Naive thymus-derived CD4-positive, alpha-beta T cell (primary cell): ENCODE measurements at regions of chr7 and their contacts with region 1.

Region 1: GRCh38 chr7:149422129-149422913 is 38.5 kb downstream of the ZNF777 start:
- DNase-seq: peak; percentile 25 to 85 (median 75)
- ATAC-seq: peak; percentile 99
- H3K4me3 ChIP-seq: peak overlapping the region; percentile 75
- H3K4me3 Mint-ChIP-seq: peak overlapping the region; percentile 69 to 80 (median 76)
- H3K27ac ChIP-seq: peak overlapping the region; percentile 77
- H3K27ac Mint-ChIP-seq: peak overlapping the region in 8 of 9 donors; percentile 68 to 84 (median 81)
- H3K4me1 ChIP-seq: no peaks in the 10 kb centered on the region
- H3K4me1 Mint-ChIP-seq: peaks cover 0 to 17% (median 7%) of the 10 kb centered on the region in 7 donors
- H3K27me3 ChIP-seq: no peaks in the 10 kb centered on the region
- H3K27me3 Mint-ChIP-seq: peaks cover 0 to 14% (median 0%) of the 10 kb centered on the region in 5 donors

Region 2: DNA sequence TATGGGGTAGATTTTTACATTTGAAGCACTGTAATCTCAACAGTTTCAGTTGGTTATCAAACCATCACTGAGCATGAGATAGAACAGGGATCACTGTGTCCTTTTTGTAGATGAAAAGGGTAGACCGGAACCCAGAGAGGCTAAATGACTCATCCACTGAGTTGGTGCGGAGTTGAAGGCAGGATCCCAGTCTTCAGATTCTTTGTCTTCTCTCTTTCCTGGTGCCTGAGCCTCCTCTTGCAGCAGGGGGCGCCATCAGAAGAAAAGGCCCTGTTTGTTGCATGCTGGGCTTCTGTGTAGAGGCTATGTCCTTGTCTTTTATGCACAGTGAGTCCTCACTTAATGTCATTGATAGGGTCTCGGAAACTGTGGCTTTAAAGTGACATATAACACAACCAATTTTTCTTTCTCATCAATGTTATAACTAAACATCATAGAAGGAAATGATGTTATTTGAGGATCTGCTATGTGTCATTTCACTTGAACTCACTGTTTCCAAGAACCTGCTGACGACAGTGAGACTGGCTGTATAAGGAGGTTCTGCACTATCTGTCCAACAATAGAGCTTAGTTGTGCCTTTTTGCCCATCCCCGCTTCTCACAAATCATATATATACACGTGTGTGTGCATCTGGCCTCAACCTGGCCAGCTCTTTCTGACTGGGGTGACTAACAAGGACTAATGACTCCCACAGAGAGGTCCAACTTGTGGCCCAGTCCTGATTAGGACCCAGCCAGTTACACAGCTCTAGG is 212.6 kb before region 1 on chr7:
- CTCF ChIA-PET with region 1: no interaction called
- POLR2A ChIA-PET with region 1: no interaction called
- intact Hi-C with region 1: loop called in 1 of 2 experiments (anchors 1 kb)
- DNase-seq: peak; percentile 18 to 74 (median 48)
- ATAC-seq: peak; percentile 73
- H3K4me3 ChIP-seq: no peak overlapping the region
- H3K4me3 Mint-ChIP-seq: peak overlapping the region in 1 of 10 donors; percentile 60
- H3K27ac ChIP-seq: no peak overlapping the region
- H3K27ac Mint-ChIP-seq: peak overlapping the region in 3 of 9 donors; percentile 6 to 79 (median 72)
- H3K4me1 ChIP-seq: no peaks in the 10 kb centered on the region
- H3K4me1 Mint-ChIP-seq: peaks cover 0 to 21% (median 5%) of the 10 kb centered on the region in 7 donors
- H3K27me3 ChIP-seq: no peaks in the 10 kb centered on the region
- H3K27me3 Mint-ChIP-seq: no peaks in the 10 kb centered on the region

Region 3: GRCh38 chr7:149239345-149240191 is 182.8 kb before region 1 on chr7 and contains the start of gene ZNF212:
- CTCF ChIA-PET with region 1: no interaction called
- POLR2A ChIA-PET with region 1: no interaction called
- intact Hi-C with region 1: loop called (anchors 1 to 2 kb)
- DNase-seq: peak; percentile 75 to 89 (median 84)
- ATAC-seq: peak; percentile 100
- H3K4me3 ChIP-seq: peak within 1 kb of the TSS; percentile 90
- H3K4me3 Mint-ChIP-seq: peak within 1 kb of the TSS; percentile 85 to 95 (median 92)
- H3K27ac ChIP-seq: peak within 1 kb of the TSS; percentile 76
- H3K27ac Mint-ChIP-seq: peak within 1 kb of the TSS; percentile 71 to 89 (median 87)
- H3K4me1 ChIP-seq: peaks cover 14 to 16% of the 10 kb centered on the region in 2 donors
- H3K4me1 Mint-ChIP-seq: peaks cover 23 to 43% (median 33%) of the 10 kb centered on the region in 7 donors
- H3K27me3 ChIP-seq: no peaks in the 10 kb centered on the region
- H3K27me3 Mint-ChIP-seq: peaks cover 0 to 6% (median 0%) of the 10 kb centered on the region in 5 donors
- total RNA-seq, gene ZNF212: 10.4 to 20.6 (median 13.3) TPM

Region 4: GRCh38 chr7:149284850-149285626 is 137.3 kb before region 1 on chr7:
- CTCF ChIA-PET with region 1: interaction called, 3 read pairs
- POLR2A ChIA-PET with region 1: interaction called, 10 read pairs
- intact Hi-C with region 1: loop called in 1 of 2 experiments (anchors 1 kb)
- DNase-seq: peak; percentile 96 to 99 (median 98)
- ATAC-seq: peak; percentile 98
- H3K4me3 ChIP-seq: peak overlapping the region; percentile 80
- H3K4me3 Mint-ChIP-seq: peak overlapping the region; percentile 79 to 97 (median 92)
- H3K27ac ChIP-seq: peak overlapping the region; percentile 72
- H3K27ac Mint-ChIP-seq: peak overlapping the region; percentile 76 to 96 (median 93)
- H3K4me1 ChIP-seq: peaks cover 30 to 36% of the 10 kb centered on the region in 2 donors
- H3K4me1 Mint-ChIP-seq: peaks cover 26 to 55% (median 46%) of the 10 kb centered on the region in 7 donors
- H3K27me3 ChIP-seq: no peaks in the 10 kb centered on the region
- H3K27me3 Mint-ChIP-seq: no peaks in the 10 kb centered on the region

Region 5: DNA sequence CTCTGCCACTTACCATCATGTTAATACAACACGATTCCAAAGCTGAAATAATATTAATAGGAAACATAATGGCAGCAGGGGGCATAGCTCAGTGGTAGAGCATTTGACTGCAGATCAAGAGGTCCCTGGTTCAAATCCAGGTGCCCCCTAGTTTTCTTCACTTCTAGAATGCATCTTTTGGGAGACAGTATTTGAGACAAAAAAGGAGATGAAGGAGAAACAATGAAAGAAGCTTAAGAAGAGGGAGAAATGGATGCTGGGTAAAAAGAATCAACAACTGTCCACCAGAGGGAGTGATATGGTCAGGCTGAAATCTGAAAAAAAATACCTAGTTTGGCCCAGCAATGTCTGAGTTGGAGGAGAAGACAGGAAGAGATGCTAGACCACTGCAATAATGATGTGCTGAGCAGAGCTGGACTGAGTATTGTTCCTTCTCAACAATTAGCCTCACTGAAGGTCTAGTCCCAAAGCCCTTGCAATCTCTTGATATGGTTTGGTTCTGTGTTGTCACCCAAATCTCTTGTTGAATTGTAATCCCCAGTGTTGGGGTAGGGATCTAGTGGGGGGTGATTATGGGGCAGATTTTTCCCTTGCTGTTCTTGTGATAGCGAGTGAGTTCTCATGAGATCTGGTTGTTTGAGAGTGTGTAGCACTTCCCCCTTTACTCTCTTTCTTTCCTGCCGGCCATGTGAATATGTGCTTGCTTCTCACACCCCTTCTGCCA is 112.0 kb before region 1 on chr7:
- CTCF ChIA-PET with region 1: no interaction called
- POLR2A ChIA-PET with region 1: no interaction called
- intact Hi-C with region 1: loop called in 1 of 2 experiments (anchors 1 kb)
- DNase-seq: peak in 3 of 9 donors; percentile 11 to 30 (median 26)
- ATAC-seq: peak; percentile 65
- H3K4me3 ChIP-seq: no peak overlapping the region
- H3K4me3 Mint-ChIP-seq: peak overlapping the region in 1 of 10 donors; percentile 0
- H3K27ac ChIP-seq: no peak overlapping the region
- H3K27ac Mint-ChIP-seq: peak overlapping the region in 5 of 9 donors; percentile 2 to 42 (median 9)
- H3K4me1 ChIP-seq: no peaks in the 10 kb centered on the region
- H3K4me1 Mint-ChIP-seq: peaks cover 0 to 6% (median 5%) of the 10 kb centered on the region in 7 donors
- H3K27me3 ChIP-seq: no peaks in the 10 kb centered on the region
- H3K27me3 Mint-ChIP-seq: peaks cover 0 to 12% (median 0%) of the 10 kb centered on the region in 5 donors

Region 6: GRCh38 chr7:149460493-149461277 is 38.4 kb after region 1 on chr7 and contains the start of gene ZNF777:
- CTCF ChIA-PET with region 1: interaction called, 8 read pairs
- POLR2A ChIA-PET with region 1: interaction called, 6 read pairs
- intact Hi-C with region 1: loop called (anchors 1 kb)
- DNase-seq: peak; percentile 65 to 84 (median 80)
- ATAC-seq: peak; percentile 99
- H3K4me3 ChIP-seq: peak within 1 kb of the TSS; percentile 80
- H3K4me3 Mint-ChIP-seq: peak within 1 kb of the TSS; percentile 78 to 91 (median 87)
- H3K27ac ChIP-seq: peak within 1 kb of the TSS; percentile 72
- H3K27ac Mint-ChIP-seq: peak within 1 kb of the TSS; percentile 28 to 89 (median 76)
- H3K4me1 ChIP-seq: peaks cover 4 to 16% of the 10 kb centered on the region in 2 donors
- H3K4me1 Mint-ChIP-seq: peaks cover 13 to 46% (median 35%) of the 10 kb centered on the region in 7 donors
- H3K27me3 ChIP-seq: no peaks in the 10 kb centered on the region
- H3K27me3 Mint-ChIP-seq: peaks cover 4 to 29% (median 10%) of the 10 kb centered on the region in 5 donors
- total RNA-seq, gene ZNF777: 11.2 to 16.1 (median 14.3) TPM

Region 7: GRCh38 chr7:149598721-149599306 is 176.5 kb after region 1 on chr7:
- CTCF ChIA-PET with region 1: no interaction called
- POLR2A ChIA-PET with region 1: interaction called, 3 read pairs
- intact Hi-C with region 1: loop called in 1 of 2 experiments (anchors 1 kb)
- DNase-seq: peak in 1 of 9 donors; percentile 30
- ATAC-seq: no peak
- H3K4me3 ChIP-seq: no peak overlapping the region
- H3K4me3 Mint-ChIP-seq: peak overlapping the region in 7 of 10 donors; percentile 18 to 84 (median 77)
- H3K27ac ChIP-seq: no peak overlapping the region
- H3K27ac Mint-ChIP-seq: peak overlapping the region in 7 of 9 donors; percentile 78 to 94 (median 88)
- H3K4me1 ChIP-seq: peaks cover 18 to 22% of the 10 kb centered on the region in 2 donors
- H3K4me1 Mint-ChIP-seq: peaks cover 30 to 50% (median 42%) of the 10 kb centered on the region in 7 donors
- H3K27me3 ChIP-seq: no peaks in the 10 kb centered on the region
- H3K27me3 Mint-ChIP-seq: peaks cover 0 to 9% (median 0%) of the 10 kb centered on the region in 5 donors